Left ventricle myocardium superior (tissue), 1 donor: ENCODE measurements at regions of chr11 and their contacts with region 1.

Region 1: DNA sequence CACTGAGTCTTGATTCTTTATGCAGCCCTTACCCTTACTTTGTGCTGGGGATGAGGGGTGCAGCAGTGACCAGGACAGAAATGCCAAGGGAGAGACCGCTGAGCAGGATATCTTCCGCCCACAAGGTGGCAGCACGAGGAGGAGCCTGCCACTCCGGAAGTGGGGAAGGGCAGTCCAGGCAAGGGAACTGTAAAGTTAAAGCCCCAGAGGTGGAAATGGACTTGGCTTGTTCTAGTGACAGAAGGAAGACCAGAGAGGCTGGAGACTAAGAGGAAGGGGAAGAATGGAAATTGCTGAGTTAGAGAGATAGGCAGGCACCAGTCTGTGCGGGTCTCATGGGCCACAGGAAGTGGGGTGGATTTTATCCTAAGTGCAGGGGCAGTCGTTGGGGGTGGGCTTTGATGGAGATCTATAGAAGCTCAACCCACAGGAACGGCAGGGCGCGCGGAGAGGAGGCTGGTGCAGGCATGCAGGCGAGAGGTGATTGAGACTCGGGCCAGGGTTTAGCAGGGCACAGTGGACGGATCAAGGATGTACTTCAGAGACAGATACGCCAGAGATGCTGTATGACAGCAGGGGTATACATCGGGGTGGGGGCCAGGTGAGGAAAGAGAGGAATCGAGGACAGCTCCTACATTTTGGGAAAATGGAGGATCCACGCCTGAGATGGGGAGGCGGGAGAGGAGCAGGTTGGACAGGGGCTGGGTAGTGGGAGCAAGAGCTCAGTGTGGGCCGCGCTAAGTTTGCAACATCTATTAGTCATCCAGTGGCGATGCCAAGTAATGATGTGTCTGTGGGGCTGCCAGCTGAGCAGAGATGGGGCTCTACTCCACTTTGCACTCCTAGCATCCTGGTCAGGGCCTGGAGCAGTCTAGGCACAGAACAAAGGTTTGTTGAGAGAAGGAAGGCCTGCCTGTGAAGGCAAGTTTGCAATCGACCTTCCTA is 3.3 kb upstream of the GRK2 start:
- DNase-seq: peak; percentile 87
- ATAC-seq: peak; percentile 75

Region 2: GRCh38 chr11:67317205-67317887 is 54.3 kb after region 1 on chr11:
- intact Hi-C with region 1: loop called (anchors 5 kb)
- DNase-seq: peak; percentile 97
- ATAC-seq: peak; percentile 93

Region 3: DNA sequence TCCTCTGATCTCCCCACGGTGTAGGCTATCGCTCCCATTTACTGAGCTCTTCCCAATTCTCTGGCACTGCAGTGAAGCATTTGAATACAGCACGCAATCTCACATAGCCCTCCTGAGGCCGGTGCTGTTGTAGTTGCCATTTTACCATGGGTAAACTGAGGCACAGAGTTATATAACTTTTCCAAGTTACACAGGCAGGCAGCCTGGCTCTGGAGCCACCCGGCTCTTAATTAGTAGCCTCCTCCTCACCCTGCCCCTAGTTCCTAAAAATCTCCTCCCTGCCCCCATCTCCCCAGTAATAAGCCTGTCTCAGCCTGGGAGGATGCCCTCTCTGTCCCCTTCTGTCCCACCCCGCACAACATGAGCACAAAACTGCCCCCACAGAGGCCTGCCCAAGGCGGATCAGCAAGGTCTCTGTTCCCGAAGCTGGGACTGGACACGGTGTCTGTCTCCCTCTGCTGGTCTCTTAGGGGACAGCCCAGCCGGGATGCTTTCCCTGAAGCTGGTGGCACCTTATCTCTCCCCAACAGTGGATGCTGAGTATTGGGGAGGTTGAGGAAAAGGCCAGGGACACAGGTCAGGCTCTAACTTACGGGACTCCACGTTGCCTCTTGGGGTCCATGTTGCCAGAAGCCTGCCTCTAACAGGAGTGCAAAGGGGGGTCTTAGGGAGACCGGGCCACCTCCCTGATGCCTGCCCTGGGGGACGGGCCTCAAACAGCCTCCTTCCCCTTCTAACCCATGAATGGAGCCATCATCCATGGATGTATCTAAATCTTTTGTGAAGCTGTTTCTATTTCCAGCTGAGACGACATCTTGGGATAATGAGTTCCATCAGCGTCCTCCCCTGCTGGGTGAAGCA is 119.5 kb after region 1 on chr11:
- intact Hi-C with region 1: no loop called
- DNase-seq: peak; percentile 84
- ATAC-seq: peak; percentile 86

Region 4: DNA sequence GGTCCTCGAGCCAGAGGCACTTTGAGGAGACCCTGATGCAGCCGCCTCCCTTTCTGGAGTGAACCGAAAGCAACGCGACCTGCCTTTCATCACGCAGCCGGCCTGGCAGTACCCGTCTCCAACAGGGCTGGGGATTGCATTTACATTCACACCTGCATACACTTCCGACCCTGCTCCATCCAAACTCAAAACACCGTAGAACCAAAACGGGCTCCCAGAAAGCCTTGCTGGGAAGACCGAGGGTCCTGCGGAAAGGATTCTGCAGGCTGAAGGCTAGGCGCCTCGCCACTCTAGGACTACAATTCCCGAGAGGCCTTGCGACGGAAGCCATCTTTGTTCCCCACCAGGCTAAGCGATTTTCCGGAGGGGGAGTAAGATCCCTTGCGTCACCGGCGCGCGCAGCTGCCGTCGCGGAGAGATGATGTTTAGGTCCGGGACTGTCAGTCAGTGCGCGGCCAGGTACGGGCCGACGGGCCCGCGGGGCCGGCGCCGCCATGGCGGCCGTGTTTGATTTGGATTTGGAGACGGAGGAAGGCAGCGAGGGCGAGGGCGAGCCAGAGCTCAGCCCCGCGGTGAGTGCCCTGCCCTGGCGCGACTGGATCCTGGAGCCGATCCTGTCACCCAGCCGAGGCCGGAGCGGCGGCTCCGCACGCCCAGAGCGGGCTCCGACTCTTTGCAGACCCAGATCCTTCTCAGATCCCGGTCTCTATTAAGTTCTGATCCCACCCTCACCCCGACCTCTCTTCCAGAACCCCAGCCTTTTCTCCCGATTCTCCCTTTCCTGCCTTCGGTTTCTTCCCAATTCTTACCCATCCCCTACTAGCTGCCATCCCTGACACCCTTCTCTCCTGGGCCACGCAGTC is 165.3 kb after region 1 on chr11 and contains the start of gene RPS6KB2:
- intact Hi-C with region 1: no loop called
- DNase-seq: peak; percentile 99
- ATAC-seq: peak; percentile 91
- total RNA-seq, gene RPS6KB2: 25.1 TPM